GM12878 (cell line): ENCODE measurements at regions of chr2 and their contacts with region 1.

Region 1: GRCh38 chr2:89840844-89841840 is 1149.7 kb downstream of the RPIA start:
- DNase-seq: no peak
- ATAC-seq: no peak
- H3K4me3 ChIP-seq: no peak overlapping the region
- H3K27ac ChIP-seq: no peak overlapping the region
- H3K4me1 ChIP-seq: no peaks in the 10 kb centered on the region
- H3K27me3 ChIP-seq: no peaks in the 10 kb centered on the region
- CTCF ChIP-seq: no peak
- EP300 ChIP-seq: no peak
- POLR2A ChIP-seq: no peak
- RAD21 ChIP-seq: no peak

Region 2: DNA sequence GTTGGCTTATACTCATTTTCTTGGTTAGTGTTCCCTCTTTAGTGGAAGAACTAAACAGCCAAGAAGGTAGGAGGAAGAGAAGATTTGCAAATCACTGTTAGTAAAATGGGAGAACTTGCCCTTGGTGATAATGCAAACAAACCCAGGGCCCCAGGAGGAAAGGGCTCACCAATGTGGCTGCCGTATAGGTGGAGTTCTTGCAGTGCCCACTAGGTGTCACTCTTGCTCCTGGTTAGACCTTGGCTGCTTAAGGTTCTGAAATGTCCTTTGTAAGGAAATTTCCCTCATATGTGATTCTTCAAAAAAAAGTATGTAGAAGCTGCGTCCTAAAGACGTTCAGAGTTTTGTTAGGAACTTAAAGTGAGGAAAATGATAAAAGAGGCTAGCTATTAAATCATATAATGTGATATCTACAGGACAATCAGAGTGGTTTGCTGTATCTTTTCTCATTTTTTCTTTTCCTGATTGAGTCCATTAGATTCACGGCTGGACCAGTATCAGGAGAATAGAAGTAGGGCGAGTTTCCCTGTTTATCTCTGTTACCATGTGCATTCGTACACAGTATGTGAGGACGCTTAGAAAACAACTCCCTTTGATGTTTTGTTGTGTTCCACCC is 1101.0 kb before region 1 on chr2:
- CTCF ChIA-PET with region 1: no interaction called
- POLR2A ChIA-PET with region 1: no interaction called
- RAD21 ChIA-PET with region 1: no interaction called
- SMC1A ChIA-PET with region 1: no interaction called
- in situ Hi-C with region 1: loop called (anchors 10 kb)
- intact Hi-C with region 1: no loop called
- DNase-seq: peak; percentile 42
- ATAC-seq: no peak; the same call in none of the 3 replicates
- H3K4me3 ChIP-seq: no peak overlapping the region
- H3K27ac ChIP-seq: no peak overlapping the region
- H3K4me1 ChIP-seq: no peaks in the 10 kb centered on the region
- H3K27me3 ChIP-seq: no peaks in the 10 kb centered on the region
- CTCF ChIP-seq: peak; percentile 88 to 96 (median 93)
- EP300 ChIP-seq: no peak
- POLR2A ChIP-seq: no peak
- RAD21 ChIP-seq: peak; percentile 89

Region 3: DNA sequence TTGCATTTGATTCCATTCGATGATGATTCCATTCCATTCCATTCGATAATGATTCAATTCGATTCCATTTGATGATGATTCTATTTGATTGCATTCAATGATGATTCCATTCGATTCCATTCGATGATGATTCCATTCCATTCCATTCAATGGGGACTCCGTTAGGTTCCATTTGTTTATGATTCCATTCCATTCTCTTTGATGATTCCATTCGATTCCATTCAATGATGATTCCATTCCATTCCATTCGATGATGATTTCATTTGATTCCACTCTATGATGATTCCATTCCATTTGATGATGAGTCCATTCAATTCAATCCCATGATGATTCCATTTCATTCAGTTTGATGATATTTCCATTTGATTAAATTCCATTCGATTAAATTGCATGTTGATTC is 40.7 kb before region 1 on chr2:
- CTCF ChIA-PET with region 1: no interaction called
- POLR2A ChIA-PET with region 1: no interaction called
- RAD21 ChIA-PET with region 1: no interaction called
- SMC1A ChIA-PET with region 1: no interaction called
- in situ Hi-C with region 1: no loop called
- intact Hi-C with region 1: no loop called
- DNase-seq: no peak
- ATAC-seq: no peak
- H3K4me3 ChIP-seq: no peak overlapping the region
- H3K27ac ChIP-seq: no peak overlapping the region
- H3K4me1 ChIP-seq: no peaks in the 10 kb centered on the region
- H3K27me3 ChIP-seq: no peaks in the 10 kb centered on the region
- CTCF ChIP-seq: no peak
- EP300 ChIP-seq: no peak
- POLR2A ChIP-seq: no peak
- RAD21 ChIP-seq: no peak

Region 4: DNA sequence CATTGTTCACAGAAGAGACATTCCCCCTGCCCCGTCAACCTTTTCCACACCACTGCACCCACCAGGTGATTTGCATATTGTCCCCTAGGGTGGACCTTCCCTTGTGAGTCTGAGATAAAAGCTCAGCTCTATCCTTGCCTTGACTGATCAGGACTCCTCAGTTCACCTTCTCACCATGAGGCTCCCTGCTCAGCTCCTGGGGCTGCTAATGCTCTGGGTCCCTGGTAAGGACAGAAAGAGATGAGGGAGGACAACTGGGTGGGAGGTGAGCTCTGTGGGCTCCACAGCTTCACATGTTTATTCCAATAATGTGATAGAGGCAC is 10.4 kb after region 1 on chr2:
- CTCF ChIA-PET with region 1: no interaction called
- POLR2A ChIA-PET with region 1: no interaction called
- RAD21 ChIA-PET with region 1: no interaction called
- SMC1A ChIA-PET with region 1: no interaction called
- in situ Hi-C with region 1: no loop called
- intact Hi-C with region 1: no loop called
- DNase-seq: no peak
- ATAC-seq: no peak
- H3K4me3 ChIP-seq: no peak overlapping the region
- H3K27ac ChIP-seq: no peak overlapping the region
- H3K4me1 ChIP-seq: no peaks in the 10 kb centered on the region
- H3K27me3 ChIP-seq: peaks cover 0 to 4% of the 10 kb centered on the region in 2 experiments; a peak in 3 of 4 replicates
- CTCF ChIP-seq: no peak
- EP300 ChIP-seq: no peak
- POLR2A ChIP-seq: no peak
- RAD21 ChIP-seq: no peak